Activated naive CD4-positive, alpha-beta T cell treated with anti-CD3 and anti-CD28 coated beads for 36 hours (primary cell): ENCODE measurements at regions of chr22 and their contacts with region 1.

Region 1: GRCh38 chr22:45096256-45096907 is 67.3 kb upstream of the NUP50 start:
- DNase-seq: peak; percentile 78
- H3K4me3 Mint-ChIP-seq: no peak overlapping the region
- H3K27ac Mint-ChIP-seq: no peak overlapping the region
- H3K4me1 Mint-ChIP-seq: no peaks in the 10 kb centered on the region
- H3K27me3 Mint-ChIP-seq: peaks cover 8% of the 10 kb centered on the region

Region 2: GRCh38 chr22:44819971-44820631 is 276.3 kb before region 1 on chr22:
- CTCF ChIA-PET with region 1: interaction called, 3 read pairs
- intact Hi-C with region 1: loop called (anchors 2 kb)
- DNase-seq: no peak
- H3K4me3 Mint-ChIP-seq: no peak overlapping the region
- H3K27ac Mint-ChIP-seq: no peak overlapping the region
- H3K4me1 Mint-ChIP-seq: no peaks in the 10 kb centered on the region
- H3K27me3 Mint-ChIP-seq: peaks cover 7% of the 10 kb centered on the region

Region 3: DNA sequence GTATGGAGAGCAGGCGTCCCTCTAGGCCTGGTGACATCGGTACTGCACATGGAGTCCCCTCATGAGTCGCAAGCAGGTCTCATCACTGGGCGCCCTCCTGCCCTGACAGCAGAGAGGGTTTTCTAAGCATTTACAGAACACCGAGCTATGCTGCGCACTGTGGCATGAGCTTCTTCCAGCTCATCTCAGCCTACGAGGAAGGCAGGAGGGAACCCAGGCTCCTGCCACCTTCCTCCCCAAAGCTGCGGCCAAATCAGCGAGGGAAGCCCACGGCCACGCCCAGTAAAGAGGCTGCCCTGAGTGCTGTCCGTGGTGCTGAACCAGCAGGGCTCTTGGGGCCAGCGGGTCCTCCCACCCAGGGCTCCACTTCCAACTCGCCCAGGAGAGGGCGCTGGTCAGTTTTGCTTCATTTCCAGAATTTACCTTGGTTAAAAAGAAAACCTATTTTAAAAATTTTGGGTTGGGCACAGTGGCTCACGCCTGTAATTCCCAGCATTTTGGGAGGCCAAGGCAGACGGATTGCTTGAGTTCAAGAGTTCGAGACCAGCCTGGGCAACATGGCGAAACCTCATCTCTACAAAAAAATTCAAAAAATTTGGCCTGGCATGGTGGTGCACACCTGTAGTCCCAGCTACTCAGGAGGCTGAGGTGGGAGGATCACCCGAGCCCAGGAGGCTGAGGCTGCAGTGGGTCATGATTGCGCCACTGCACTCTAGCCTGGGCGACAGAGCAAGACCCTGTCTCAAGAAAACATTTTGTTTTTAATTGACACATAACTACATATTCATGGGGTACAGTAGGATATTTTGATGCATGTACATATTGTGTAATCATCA is 120.7 kb before region 1 on chr22:
- CTCF ChIA-PET with region 1: no interaction called
- intact Hi-C with region 1: loop called (anchors 1 kb)
- DNase-seq: peak; percentile 91
- H3K4me3 Mint-ChIP-seq: no peak overlapping the region
- H3K27ac Mint-ChIP-seq: no peak overlapping the region
- H3K4me1 Mint-ChIP-seq: no peaks in the 10 kb centered on the region
- H3K27me3 Mint-ChIP-seq: peaks cover 6% of the 10 kb centered on the region

Region 4: GRCh38 chr22:45009881-45010531 is 86.4 kb before region 1 on chr22 and contains the start of gene PHF21B:
- CTCF ChIA-PET with region 1: interaction called, 3 read pairs
- intact Hi-C with region 1: loop called (anchors 1 kb)
- DNase-seq: peak; percentile 13
- H3K4me3 Mint-ChIP-seq: peak within 1 kb of the TSS; percentile 80
- H3K27ac Mint-ChIP-seq: no peak within 1 kb of the TSS
- H3K4me1 Mint-ChIP-seq: peaks cover 15% of the 10 kb centered on the region
- H3K27me3 Mint-ChIP-seq: peaks cover 54% of the 10 kb centered on the region
- total RNA-seq, gene PHF21B: not detected

Region 5: GRCh38 chr22:45036154-45036553 is 60.2 kb before region 1 on chr22:
- CTCF ChIA-PET with region 1: no interaction called
- intact Hi-C with region 1: no loop called
- DNase-seq: no peak
- H3K4me3 Mint-ChIP-seq: no peak overlapping the region
- H3K27ac Mint-ChIP-seq: no peak overlapping the region
- H3K4me1 Mint-ChIP-seq: no peaks in the 10 kb centered on the region
- H3K27me3 Mint-ChIP-seq: peaks cover 12% of the 10 kb centered on the region

Region 6: GRCh38 chr22:45397806-45398205 is 301.4 kb after region 1 on chr22:
- CTCF ChIA-PET with region 1: no interaction called
- intact Hi-C with region 1: no loop called
- DNase-seq: no peak
- H3K4me3 Mint-ChIP-seq: no peak overlapping the region
- H3K27ac Mint-ChIP-seq: no peak overlapping the region
- H3K4me1 Mint-ChIP-seq: no peaks in the 10 kb centered on the region
- H3K27me3 Mint-ChIP-seq: no peaks in the 10 kb centered on the region